MCF 10A (cell line): ENCODE measurements at regions of chr6 and their contacts with region 1.

Region 1: GRCh38 chr6:41367700-41368099 is 32.3 kb downstream of the NCR2 start:
- DNase-seq: peak; percentile 62
- H3K4me3 Mint-ChIP-seq: no peak overlapping the region
- H3K27ac Mint-ChIP-seq: no peak overlapping the region
- H3K4me1 Mint-ChIP-seq: no peaks in the 10 kb centered on the region
- H3K27me3 Mint-ChIP-seq: peaks cover 62% of the 10 kb centered on the region
- CTCF ChIP-seq: peak; percentile 74

Region 2: DNA sequence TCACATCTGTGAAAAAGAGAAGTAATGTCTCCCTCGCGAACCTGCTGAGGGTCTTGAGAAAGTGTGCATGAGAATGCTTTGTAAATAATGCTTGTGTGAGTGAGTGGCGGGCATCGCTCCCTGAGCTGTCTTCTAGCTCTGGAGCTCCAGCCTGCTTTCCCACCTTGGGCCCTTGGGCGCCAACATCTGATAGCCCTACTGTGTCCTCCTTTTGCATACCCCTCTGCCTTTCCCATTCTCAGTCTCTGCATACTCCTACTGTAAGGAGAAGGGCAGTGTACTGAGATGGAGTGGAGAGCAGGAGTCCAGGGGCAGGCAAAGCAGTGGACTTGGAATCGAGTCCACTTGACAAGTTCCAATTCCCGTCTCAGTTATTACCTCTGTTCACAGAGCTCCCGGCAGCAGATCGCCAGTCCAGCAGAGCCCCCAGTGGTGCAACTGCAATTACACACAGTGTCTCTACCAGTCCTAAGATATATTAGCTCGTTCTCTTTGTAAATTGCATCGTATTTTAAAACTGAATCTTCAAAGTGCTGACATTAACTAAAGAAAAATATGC is 33.1 kb before region 1 on chr6:
- CTCF ChIA-PET with region 1: interaction called, 13 read pairs
- POLR2A ChIA-PET with region 1: no interaction called
- intact Hi-C with region 1: no loop called
- DNase-seq: no peak
- H3K4me3 Mint-ChIP-seq: no peak overlapping the region
- H3K27ac Mint-ChIP-seq: no peak overlapping the region
- H3K4me1 Mint-ChIP-seq: no peaks in the 10 kb centered on the region
- H3K27me3 Mint-ChIP-seq: peaks cover 68% of the 10 kb centered on the region
- CTCF ChIP-seq: no peak

Region 3: DNA sequence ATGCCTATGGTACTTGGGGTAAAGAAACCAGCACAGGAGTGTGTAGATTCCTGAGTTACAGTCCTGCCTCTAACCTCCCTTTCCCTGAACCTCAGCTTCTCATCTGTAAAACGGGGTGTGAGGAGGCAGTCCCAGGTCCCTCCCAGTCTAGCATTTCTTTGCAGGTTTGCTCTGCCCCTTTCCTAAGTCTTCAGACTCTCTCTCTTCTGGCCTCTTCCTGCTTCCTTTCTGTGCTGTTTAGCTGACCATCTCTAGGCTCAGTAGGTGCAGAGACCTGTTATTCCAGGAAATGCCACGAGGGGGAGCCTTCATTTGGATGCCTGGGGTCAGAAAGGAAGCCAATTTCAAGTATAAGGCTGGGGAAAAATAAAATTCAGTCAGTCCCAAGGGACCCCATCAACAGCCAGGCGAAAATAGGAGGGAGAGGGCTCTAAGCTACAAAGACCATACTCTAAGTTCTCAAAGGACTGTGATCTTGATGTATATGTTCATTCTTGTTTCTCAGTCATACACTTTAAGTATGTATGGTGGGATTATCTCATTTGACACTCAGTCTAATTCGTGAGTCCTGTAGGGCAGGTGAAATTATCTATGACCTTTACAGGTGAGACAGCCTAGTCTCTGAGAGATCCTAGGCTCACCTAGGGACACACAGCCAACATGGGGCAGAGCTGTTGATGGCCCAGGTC is 56.8 kb after region 1 on chr6:
- CTCF ChIA-PET with region 1: interaction called, 10 read pairs
- POLR2A ChIA-PET with region 1: no interaction called
- intact Hi-C with region 1: no loop called
- DNase-seq: peak; percentile 78
- H3K4me3 Mint-ChIP-seq: no peak overlapping the region
- H3K27ac Mint-ChIP-seq: no peak overlapping the region
- H3K4me1 Mint-ChIP-seq: no peaks in the 10 kb centered on the region
- H3K27me3 Mint-ChIP-seq: peaks cover 23% of the 10 kb centered on the region
- CTCF ChIP-seq: peak; percentile 65

Region 4: GRCh38 chr6:41581381-41581991 is 213.8 kb after region 1 on chr6:
- CTCF ChIA-PET with region 1: interaction called, 16 read pairs
- POLR2A ChIA-PET with region 1: no interaction called
- intact Hi-C with region 1: no loop called
- DNase-seq: peak; percentile 87
- H3K4me3 Mint-ChIP-seq: no peak overlapping the region
- H3K27ac Mint-ChIP-seq: peak overlapping the region; percentile 49
- H3K4me1 Mint-ChIP-seq: peaks cover 37% of the 10 kb centered on the region
- H3K27me3 Mint-ChIP-seq: no peaks in the 10 kb centered on the region
- CTCF ChIP-seq: no peak

Region 5: DNA sequence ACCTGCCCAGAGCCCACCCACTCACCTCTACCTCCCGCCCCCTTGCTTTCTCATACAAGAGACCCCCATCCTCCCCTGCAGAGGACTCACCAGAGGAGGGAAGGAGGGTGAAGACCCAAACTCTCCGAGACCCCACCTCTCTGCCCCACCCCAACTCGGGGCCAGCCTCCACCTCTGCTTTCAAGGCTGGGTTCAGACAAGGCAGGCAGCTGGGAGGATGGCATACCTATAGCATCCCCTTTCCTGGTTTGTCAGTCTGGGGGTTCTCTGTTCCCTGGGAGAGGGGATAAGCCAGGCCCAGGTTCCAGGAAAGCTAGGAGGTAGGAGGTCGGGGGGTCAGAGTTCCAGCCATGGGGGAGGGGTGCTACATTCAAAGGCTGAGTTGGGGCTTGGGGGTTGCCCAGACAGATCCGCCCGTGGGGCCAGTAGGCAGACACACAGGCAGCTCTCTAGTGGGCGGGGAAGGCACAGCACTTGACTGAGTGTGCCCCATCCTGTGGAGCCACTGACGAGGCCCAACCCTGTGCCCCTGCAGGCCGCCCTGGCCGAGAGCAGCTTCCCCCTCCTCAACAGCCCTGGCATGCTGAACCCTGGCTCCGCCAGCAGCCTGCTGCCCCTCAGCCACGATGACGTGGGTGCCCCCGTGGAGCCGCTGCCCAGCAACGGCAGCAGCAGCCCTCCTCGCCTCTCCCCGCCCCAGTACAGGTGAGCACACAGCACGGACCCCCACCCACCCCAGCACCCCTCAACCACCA is 229.7 kb after region 1 on chr6:
- CTCF ChIA-PET with region 1: interaction called, 18 read pairs
- POLR2A ChIA-PET with region 1: no interaction called
- intact Hi-C with region 1: loop called (anchors 1 kb)
- DNase-seq: no peak
- H3K4me3 Mint-ChIP-seq: no peak overlapping the region
- H3K27ac Mint-ChIP-seq: no peak overlapping the region
- H3K4me1 Mint-ChIP-seq: no peaks in the 10 kb centered on the region
- H3K27me3 Mint-ChIP-seq: no peaks in the 10 kb centered on the region
- CTCF ChIP-seq: no peak

Region 6: GRCh38 chr6:41683510-41684310 is 316.0 kb after region 1 on chr6:
- CTCF ChIA-PET with region 1: interaction called, 9 read pairs
- POLR2A ChIA-PET with region 1: no interaction called
- intact Hi-C with region 1: loop called (anchors 1 kb)
- DNase-seq: peak; percentile 65
- H3K4me3 Mint-ChIP-seq: no peak overlapping the region
- H3K27ac Mint-ChIP-seq: no peak overlapping the region
- H3K4me1 Mint-ChIP-seq: no peaks in the 10 kb centered on the region
- H3K27me3 Mint-ChIP-seq: no peaks in the 10 kb centered on the region
- CTCF ChIP-seq: peak; percentile 68